ENCODE measurements at regions of chr3 and their contacts with region 1.

Region 1: GRCh38 chr3:133487920-133488540 is 85.5 kb upstream of the CDV3 start:
- DNase-seq: peak; percentile 60
- H3K4me3 Mint-ChIP-seq: no peak overlapping the region
- H3K27ac Mint-ChIP-seq: no peak overlapping the region
- H3K4me1 Mint-ChIP-seq: peaks cover 51% of the 10 kb centered on the region
- H3K27me3 Mint-ChIP-seq: no peaks in the 10 kb centered on the region

Region 2: DNA sequence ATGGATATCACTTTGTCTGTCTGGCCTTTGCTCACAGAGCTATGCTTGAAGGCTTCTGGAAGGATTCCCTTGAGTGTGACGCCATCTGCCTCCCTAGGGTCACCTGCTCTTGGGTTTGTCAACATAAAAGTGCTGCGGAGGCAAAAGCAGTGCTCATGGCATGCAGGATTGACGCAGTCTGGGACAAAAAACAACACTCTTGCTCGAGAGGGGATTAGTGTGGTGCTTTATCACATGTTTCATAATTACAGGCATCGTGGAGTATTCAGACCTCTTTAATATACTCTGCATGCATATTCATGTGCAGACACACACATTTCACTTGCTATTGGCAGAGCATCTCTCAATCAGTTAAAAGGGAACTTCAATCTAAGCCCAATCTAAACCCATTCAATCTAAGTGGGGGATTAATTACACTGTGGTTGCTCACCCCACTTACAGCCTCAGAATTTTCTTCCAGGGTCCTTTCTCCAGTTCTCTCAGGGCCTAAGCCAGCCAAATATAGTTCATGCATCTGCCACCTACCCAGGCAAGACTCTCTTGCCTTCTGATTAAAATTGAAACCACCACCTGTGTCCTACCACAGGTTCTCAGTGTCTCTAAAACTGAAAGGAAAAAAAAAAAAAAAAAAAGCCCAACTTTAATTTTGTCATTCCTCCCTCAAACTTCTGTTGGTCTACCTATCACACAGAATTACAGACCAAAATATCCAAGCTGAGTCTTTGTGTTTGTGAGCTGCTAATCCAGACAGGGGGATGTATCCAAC is 12.6 kb before region 1 on chr3:
- CTCF ChIA-PET with region 1: interaction called, 24 read pairs
- DNase-seq: peak; percentile 48
- H3K4me3 Mint-ChIP-seq: no peak overlapping the region
- H3K27ac Mint-ChIP-seq: peak overlapping the region; percentile 82
- H3K4me1 Mint-ChIP-seq: peaks cover 67% of the 10 kb centered on the region
- H3K27me3 Mint-ChIP-seq: no peaks in the 10 kb centered on the region

Region 3: DNA sequence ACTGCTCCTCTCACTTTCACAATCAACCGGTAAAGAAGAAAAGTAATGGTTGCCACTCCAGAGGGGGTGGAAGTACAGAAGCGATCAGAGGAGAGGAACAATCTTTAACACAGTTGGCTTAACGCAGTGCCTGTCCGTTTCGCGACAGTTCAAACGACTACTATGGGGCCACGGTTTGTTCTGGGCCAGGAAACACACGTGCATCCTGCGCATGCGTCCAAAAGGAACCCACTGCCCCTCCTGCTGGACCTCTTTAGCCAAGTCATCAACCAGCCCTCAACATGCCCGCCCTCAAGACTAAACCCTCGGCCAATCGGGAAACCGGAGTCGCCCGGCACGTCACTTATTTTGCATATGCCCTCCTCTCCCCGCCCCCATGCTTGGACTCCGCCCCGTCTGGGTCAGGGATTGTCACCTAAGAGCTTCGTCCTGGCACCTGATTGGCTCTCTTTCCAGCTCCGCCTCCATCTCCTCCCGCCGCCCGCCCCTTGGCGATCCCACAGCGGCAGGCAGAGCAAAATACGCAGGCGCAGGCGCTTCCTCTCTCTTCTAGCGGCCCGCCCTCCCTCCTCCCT is 85.1 kb after region 1 on chr3:
- CTCF ChIA-PET with region 1: interaction called, 84 read pairs
- DNase-seq: peak; percentile 100
- H3K4me3 Mint-ChIP-seq: peak overlapping the region; percentile 79
- H3K27ac Mint-ChIP-seq: peak overlapping the region; percentile 99
- H3K4me1 Mint-ChIP-seq: peaks cover 54% of the 10 kb centered on the region
- H3K27me3 Mint-ChIP-seq: no peaks in the 10 kb centered on the region

Measured in activated naive CD4-positive, alpha-beta T cell treated with anti-CD3 and anti-CD28 coated beads, Interleukin-2, amount 10 ng/mL, durations not matched to agents 7 days and 5 days (primary cell).